ENCODE measurements at regions of chr1 and their contacts with region 1.

Region 1: GRCh38 chr1:11037740-11038182 is 9.3 kb downstream of the MASP2 start:
- DNase-seq: peak; percentile 91
- ATAC-seq: peak; percentile 98
- H3K4me3 Mint-ChIP-seq: no peak overlapping the region
- H3K27ac Mint-ChIP-seq: no peak overlapping the region
- H3K4me1 Mint-ChIP-seq: peaks cover 2% of the 10 kb centered on the region; the same call in 1 of the 2 replicates
- H3K27me3 Mint-ChIP-seq: no peaks in the 10 kb centered on the region
- CTCF ChIP-seq: peak; percentile 93

Region 2: GRCh38 chr1:10948463-10948775 is 89.3 kb before region 1 on chr1:
- CTCF ChIA-PET with region 1: no interaction called
- POLR2A ChIA-PET with region 1: no interaction called
- DNase-seq: no peak
- ATAC-seq: no peak
- H3K4me3 Mint-ChIP-seq: no peak overlapping the region
- H3K27ac Mint-ChIP-seq: no peak overlapping the region
- H3K4me1 Mint-ChIP-seq: peaks cover 9% of the 10 kb centered on the region
- H3K27me3 Mint-ChIP-seq: peaks cover 6% of the 10 kb centered on the region
- CTCF ChIP-seq: no peak

Region 3: GRCh38 chr1:11027316-11027715 is 10.4 kb before region 1 on chr1:
- CTCF ChIA-PET with region 1: interaction called, 14 read pairs
- POLR2A ChIA-PET with region 1: no interaction called
- DNase-seq: no peak
- ATAC-seq: no peak
- H3K4me3 Mint-ChIP-seq: no peak overlapping the region
- H3K27ac Mint-ChIP-seq: peak overlapping the region; percentile 48; the same call in 1 of the 2 replicates
- H3K4me1 Mint-ChIP-seq: peaks cover 15% of the 10 kb centered on the region; the same call in 1 of the 2 replicates
- H3K27me3 Mint-ChIP-seq: no peaks in the 10 kb centered on the region
- CTCF ChIP-seq: no peak

Region 4: DNA sequence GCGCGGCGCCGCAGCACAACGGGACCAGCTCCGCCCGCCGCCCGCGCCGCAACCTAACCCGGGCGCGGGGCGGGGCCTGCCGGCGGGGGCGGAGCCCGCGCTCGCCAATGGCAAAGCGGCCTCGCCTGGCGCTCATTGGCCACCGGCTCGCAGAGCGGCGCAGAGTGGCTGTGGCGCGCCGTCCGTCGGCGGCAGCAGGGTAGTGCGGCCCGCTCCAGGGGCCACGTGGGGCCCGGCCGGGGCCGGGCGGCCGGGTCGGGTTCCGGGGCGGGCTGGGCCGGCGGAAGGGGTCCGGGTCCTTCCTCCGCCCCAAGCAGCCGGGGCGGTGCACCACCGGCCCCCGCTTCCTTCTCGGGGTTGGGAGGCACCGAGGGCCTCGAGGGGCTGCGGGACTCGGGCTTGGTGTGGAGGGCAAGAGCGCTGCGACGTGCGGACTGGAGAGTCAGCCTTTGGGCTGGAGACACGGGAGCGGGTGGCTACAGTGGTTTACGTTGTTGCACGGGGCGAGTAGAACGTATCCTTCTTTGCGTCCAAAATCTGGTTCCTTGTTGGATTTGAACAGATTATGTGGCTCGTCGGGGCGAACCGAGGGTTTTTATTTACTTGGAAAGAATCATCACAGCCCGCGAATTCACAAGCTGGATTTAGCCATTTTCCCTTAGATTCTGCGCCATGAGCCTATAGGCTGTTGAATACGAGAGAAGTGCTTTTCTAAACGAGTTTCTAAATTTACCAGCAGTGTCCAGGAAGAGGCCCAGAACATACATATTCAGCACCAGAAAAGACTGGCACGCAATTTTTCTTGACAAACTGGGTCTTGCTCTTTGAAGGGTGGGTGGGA is 22.4 kb after region 1 on chr1 and contains the start of gene SRM:
- CTCF ChIA-PET with region 1: interaction called, 67 read pairs
- POLR2A ChIA-PET with region 1: no interaction called
- DNase-seq: peak; percentile 93
- ATAC-seq: peak; percentile 95
- H3K4me3 Mint-ChIP-seq: peak within 1 kb of the TSS; percentile 94
- H3K27ac Mint-ChIP-seq: peak within 1 kb of the TSS; percentile 94
- H3K4me1 Mint-ChIP-seq: peaks cover 16% of the 10 kb centered on the region
- H3K27me3 Mint-ChIP-seq: no peaks in the 10 kb centered on the region
- CTCF ChIP-seq: no peak
- total RNA-seq, gene SRM: 164 to 200 TPM (median 170 TPM) in 3 replicates

Region 5: GRCh38 chr1:11078631-11079030 is 40.9 kb after region 1 on chr1:
- CTCF ChIA-PET with region 1: interaction called, 21 read pairs
- POLR2A ChIA-PET with region 1: no interaction called
- DNase-seq: no peak
- ATAC-seq: no peak
- H3K4me3 Mint-ChIP-seq: no peak overlapping the region
- H3K27ac Mint-ChIP-seq: no peak overlapping the region
- H3K4me1 Mint-ChIP-seq: no peaks in the 10 kb centered on the region
- H3K27me3 Mint-ChIP-seq: no peaks in the 10 kb centered on the region
- CTCF ChIP-seq: no peak

Region 6: DNA sequence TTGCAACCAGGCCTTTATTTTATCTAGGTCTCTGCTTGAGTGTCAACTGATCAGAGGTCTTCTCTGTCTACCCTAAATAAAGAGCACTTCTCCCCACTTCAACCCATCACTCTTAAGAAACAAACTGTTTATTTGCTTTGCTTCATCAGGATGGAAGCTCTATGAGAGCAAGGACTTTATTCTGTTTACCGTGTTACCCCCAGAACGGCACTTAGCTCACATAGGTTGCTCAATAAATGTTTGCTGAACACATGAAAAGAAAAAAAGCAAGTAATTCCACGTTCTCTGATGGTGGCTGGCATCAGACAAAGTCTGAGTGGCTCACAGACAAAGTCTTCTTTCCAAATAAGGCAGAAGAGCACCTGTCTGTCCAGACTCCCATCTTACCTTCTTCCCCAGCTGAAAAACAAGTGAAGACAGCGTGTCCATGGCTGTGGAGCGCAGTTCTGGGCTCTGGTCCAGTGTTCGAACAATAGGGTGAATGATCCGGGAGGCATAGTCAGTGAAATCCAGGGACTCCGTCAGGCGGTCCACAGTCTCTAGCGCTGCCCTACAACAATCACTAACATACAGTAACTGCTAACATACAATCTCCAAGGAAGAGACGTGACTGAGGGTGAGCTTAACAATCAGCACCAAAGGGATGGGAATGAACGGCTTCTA is 174.3 kb after region 1 on chr1:
- CTCF ChIA-PET with region 1: no interaction called
- POLR2A ChIA-PET with region 1: no interaction called
- DNase-seq: no peak
- ATAC-seq: no peak
- H3K4me3 Mint-ChIP-seq: no peak overlapping the region
- H3K27ac Mint-ChIP-seq: no peak overlapping the region
- H3K4me1 Mint-ChIP-seq: no peaks in the 10 kb centered on the region
- H3K27me3 Mint-ChIP-seq: no peaks in the 10 kb centered on the region
- CTCF ChIP-seq: no peak

Region 7: GRCh38 chr1:11308699-11309224 is 271.0 kb after region 1 on chr1:
- CTCF ChIA-PET with region 1: no interaction called
- POLR2A ChIA-PET with region 1: no interaction called
- DNase-seq: no peak
- ATAC-seq: no peak
- H3K4me3 Mint-ChIP-seq: no peak overlapping the region
- H3K27ac Mint-ChIP-seq: no peak overlapping the region
- H3K4me1 Mint-ChIP-seq: peaks cover 12% of the 10 kb centered on the region
- H3K27me3 Mint-ChIP-seq: no peaks in the 10 kb centered on the region; the same call in 1 of the 2 replicates
- CTCF ChIP-seq: no peak

Region 8: GRCh38 chr1:11535761-11536572 is 498.2 kb after region 1 on chr1:
- CTCF ChIA-PET with region 1: no interaction called
- POLR2A ChIA-PET with region 1: no interaction called
- DNase-seq: no peak
- ATAC-seq: no peak
- H3K4me3 Mint-ChIP-seq: no peak overlapping the region
- H3K27ac Mint-ChIP-seq: no peak overlapping the region
- H3K4me1 Mint-ChIP-seq: peaks cover 17% of the 10 kb centered on the region
- H3K27me3 Mint-ChIP-seq: no peaks in the 10 kb centered on the region
- CTCF ChIP-seq: no peak